PC-9 (cell line): ENCODE measurements at regions of chr2 and their contacts with region 1.

Region 1: DNA sequence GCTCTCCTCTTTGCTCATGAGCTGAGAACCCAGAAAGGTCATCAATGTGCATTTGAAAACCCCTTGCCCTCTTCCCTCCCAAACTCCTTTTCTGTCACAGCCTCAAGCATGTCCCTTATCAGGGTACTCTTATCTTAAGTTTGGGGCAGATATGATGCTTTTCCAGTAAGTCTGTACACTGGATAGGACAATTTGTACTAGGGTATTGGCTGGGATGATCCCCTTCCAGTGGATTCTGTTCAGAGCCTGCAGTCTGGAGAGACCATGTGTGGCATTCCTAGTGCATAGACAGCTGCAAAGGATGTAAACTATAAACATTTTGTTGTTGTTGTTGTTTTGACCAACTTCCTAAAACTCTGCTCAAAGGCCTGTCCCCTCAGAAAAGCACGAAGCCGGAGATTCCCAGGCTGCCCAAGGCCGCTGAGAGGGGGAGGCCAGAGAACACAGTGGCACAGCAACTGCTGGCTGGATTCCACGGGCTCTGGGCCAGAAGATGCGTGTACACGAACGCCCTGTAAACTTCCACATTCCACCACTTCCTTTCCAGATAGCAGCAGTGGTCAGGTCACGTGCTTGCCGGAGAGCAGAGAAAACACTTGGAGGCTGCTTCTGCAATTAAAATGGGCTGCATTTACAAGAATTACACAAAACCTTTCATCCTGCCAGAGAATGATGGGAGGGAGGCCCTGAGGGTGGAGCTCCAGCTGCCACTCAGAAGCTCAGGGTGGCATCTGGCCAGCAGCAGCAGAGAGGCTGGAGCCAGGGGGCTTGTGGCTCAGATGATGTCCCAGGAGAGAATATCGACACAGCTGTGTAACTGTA is 42.1 kb downstream of the BMP10 start:
- DNase-seq: peak in 1 of 2 experiments; percentile 79
- H3K4me3 ChIP-seq: no peak overlapping the region
- H3K27ac ChIP-seq: no peak overlapping the region
- H3K4me1 ChIP-seq: no peaks in the 10 kb centered on the region
- H3K27me3 ChIP-seq: no peaks in the 10 kb centered on the region
- CTCF ChIP-seq: no peak

Region 2: DNA sequence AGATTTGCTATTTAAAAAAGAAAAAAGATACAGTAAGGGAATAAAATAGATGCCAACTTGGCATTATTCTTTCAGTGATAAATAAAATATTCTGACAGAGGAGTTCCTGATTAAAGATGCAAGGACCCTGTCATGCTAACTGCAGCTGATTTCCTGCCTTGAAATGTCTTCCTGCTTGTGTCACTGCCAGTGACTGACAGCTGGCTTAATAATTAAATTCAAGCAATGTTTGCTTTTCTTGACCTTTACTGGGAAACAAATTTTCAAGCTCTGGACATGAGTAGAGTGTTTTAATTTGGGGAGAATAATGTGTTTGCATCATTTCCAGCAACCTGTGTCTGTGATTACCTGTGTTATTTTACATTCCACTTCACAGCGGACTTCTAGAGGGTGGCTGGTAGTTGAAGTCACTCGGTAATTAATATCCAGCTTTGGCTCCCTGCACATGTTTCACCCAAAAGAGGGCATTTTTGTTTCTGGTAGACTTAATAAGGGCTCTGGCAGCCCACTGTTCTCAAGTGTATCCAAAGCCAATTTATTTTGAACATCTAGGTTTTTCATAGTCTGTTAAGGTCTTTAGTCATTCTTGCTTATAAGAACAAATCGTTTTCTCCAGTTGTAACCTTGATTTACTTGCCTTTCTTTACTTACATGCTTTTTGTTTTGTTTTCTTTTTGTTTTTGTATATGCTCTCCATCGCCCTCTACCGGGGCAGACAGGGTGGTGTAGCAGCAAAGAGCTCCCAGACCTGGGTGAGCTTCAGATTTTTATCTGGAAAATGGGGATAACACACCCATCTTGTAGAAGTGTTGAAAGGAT is 234.2 kb before region 1 on chr2:
- CTCF ChIA-PET with region 1: no interaction called
- POLR2A ChIA-PET with region 1: no interaction called
- intact Hi-C with region 1: no loop called
- DNase-seq: peak in 1 of 2 experiments; percentile 33
- H3K4me3 ChIP-seq: no peak overlapping the region
- H3K27ac ChIP-seq: no peak overlapping the region
- H3K4me1 ChIP-seq: no peaks in the 10 kb centered on the region
- H3K27me3 ChIP-seq: no peaks in the 10 kb centered on the region
- CTCF ChIP-seq: peak; percentile 89

Region 3: DNA sequence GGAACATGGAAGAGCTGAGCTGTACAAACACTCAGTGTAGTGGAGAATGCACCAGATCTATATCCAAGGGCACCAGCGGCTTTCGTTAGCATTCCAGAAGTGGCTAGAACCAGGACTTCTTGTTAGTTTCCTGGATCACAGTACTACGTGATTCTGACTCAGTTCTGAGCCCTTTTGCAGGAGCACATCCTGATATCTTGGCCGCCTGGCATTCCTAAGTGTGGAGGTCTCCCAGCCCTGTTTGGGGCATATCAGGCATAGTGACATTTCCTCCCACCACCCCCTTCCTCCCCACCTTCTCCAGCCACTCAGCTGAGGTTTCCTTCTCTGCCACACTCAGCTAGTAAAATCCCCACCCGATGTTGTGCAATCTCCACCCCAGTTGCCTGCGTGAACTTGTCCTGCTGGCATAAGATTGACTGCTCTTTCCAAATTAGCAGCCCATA is 21.3 kb before region 1 on chr2:
- CTCF ChIA-PET with region 1: no interaction called
- POLR2A ChIA-PET with region 1: interaction called, 12 read pairs
- intact Hi-C with region 1: no loop called
- DNase-seq: no peak
- H3K4me3 ChIP-seq: no peak overlapping the region
- H3K27ac ChIP-seq: no peak overlapping the region
- H3K4me1 ChIP-seq: no peaks in the 10 kb centered on the region
- H3K27me3 ChIP-seq: no peaks in the 10 kb centered on the region; the same call in 1 of the 2 replicates
- CTCF ChIP-seq: no peak

Region 4: DNA sequence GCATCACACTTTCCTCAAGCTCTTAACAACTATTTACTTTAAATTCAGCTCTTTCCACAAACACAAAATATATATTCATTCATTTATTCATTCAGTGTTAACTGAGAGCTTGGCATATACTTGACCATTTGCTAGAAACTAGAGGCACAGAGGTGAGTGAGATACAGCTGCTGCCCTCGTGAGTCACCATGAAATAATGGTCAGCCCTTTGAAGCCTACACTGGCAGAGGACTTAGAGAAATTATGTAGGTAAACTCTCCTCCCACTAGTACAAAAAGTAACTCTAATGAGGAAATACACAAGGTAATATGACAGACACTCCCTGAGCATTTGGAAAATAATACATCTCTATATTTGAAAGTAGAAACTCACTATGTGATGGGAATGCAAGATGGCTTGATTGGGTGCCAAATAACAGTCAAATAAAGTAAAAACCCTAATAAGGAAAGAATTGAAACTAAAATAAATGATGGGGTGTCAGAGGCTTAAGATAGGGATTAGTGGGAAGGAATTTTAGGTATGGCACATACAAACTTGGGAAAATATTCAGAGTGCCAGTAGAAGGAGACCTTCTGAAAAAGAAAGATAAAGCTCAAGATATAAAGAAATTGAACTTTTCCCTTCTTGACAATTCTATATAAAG is 245.0 kb after region 1 on chr2:
- CTCF ChIA-PET with region 1: no interaction called
- POLR2A ChIA-PET with region 1: no interaction called
- intact Hi-C with region 1: no loop called
- DNase-seq: peak; percentile 21 to 61
- H3K4me3 ChIP-seq: no peak overlapping the region
- H3K27ac ChIP-seq: no peak overlapping the region
- H3K4me1 ChIP-seq: 0 out of 2 replicates have a peak, but pooled peaks cover 5% of the 10 kb centered on the region
- H3K27me3 ChIP-seq: no peaks in the 10 kb centered on the region
- CTCF ChIP-seq: no peak

Region 5: DNA sequence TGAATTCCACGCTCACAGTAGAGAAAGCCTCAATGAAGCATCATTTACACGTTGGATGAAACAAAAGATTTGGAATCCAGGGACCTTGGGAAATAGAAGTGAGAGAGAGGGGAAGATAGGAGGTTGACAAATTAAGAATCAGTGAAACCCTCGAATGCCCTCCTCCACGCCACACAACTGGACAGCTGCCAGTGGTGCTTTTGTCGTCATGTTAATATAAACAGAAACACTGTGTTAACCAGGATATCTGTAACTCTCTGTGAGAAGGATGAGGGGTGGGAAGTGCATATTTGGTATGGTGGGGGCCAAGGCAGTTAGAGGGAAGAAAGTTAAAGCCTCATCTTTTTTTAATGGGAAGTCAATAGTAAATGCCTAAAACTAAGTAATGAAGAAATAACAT is 449.3 kb after region 1 on chr2:
- CTCF ChIA-PET with region 1: no interaction called
- POLR2A ChIA-PET with region 1: no interaction called
- intact Hi-C with region 1: no loop called
- DNase-seq: no peak
- H3K4me3 ChIP-seq: no peak overlapping the region
- H3K27ac ChIP-seq: no peak overlapping the region
- H3K4me1 ChIP-seq: no peaks in the 10 kb centered on the region
- H3K27me3 ChIP-seq: no peaks in the 10 kb centered on the region
- CTCF ChIP-seq: no peak